ENCODE measurements at regions of chr5 and their contacts with region 1.

Region 1: DNA sequence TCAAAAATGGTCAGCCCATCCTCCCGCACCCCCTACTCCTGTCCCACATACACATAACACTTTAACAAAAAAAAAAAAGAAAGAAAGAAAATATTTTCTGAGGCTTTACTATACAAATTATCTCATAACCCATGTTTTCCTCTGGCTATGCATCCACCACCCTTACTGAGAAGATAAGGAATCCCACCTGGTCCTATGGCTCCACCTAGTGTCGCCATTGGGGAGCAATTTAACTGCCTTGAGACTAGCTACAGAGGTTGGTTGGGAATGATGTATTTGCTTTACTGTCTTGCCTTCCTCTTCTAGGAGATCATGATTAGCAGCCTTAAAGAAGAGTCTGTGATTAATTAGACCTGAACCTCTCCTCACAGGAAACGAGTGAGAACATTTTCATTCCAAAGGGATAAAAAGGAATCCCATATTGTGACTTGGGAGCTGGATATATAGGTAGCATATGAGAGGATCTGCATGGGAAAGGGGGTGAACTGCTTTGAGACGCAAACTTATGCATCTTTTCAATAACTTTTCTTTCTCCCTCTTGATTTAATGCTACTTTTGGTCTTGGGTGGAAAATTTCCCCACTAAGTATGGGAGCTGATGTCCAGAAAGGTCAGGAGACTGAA is 77.7 kb upstream of the SELENOP start:
- DNase-seq: peak; percentile 68 to 83 (median 70)
- ATAC-seq: peak; percentile 92 to 96 (median 93)
- H3K4me3 ChIP-seq: no peak overlapping the region
- H3K27ac ChIP-seq: peak overlapping the region in 1 of 3 donors; percentile 29
- H3K4me1 ChIP-seq: peaks cover 0 to 31% (median 4%) of the 10 kb centered on the region in 4 donors
- H3K27me3 ChIP-seq: no peaks in the 10 kb centered on the region
- CTCF ChIP-seq: peak; percentile 91 to 93 (median 93)
- POLR2A ChIP-seq: no peak

Region 2: GRCh38 chr5:42772265-42772993 is 117.0 kb before region 1 on chr5:
- intact Hi-C with region 1: no loop called
- DNase-seq: no peak
- ATAC-seq: peak in 1 of 4 donors; percentile 71
- H3K4me3 ChIP-seq: no peak overlapping the region
- H3K27ac ChIP-seq: no peak overlapping the region
- H3K4me1 ChIP-seq: peaks cover 0 to 8% (median 0%) of the 10 kb centered on the region in 4 donors
- H3K27me3 ChIP-seq: no peaks in the 10 kb centered on the region
- CTCF ChIP-seq: no peak
- POLR2A ChIP-seq: no peak

Region 3: DNA sequence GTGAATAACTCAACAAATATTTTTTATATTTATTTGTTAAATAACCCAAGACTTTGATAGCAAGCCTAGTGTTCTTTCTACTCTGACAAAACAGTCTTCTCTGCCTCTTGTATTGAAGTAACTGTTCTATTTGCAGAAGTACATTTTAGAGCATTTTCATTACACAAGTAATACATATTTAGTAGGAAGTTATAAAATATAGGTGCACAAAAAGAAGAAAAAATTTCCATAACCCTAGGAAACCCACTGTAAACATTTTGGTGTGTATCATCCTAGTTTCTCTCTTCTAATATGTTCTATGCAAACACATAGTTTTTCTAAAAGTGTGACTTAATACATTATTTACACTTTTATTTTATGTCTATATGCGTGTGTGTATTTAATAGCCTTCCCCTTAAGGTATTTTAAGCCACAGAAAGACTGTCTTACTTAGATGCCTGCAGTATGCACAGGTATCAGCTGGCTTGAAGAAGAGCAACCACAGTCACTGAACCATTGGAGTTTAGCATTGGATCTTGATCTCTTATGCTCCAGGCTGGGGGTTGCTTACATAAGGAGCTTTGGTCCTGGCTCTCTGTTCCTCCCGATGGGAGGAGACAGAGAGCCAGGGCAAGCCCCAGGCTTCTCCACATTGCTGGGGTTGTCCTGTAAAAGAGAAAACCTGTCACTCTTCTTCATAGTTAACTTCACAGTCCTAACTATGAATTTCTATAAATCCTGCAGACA is 81.5 kb before region 1 on chr5:
- intact Hi-C with region 1: loop called in 1 of 2 experiments (anchors 10 kb)
- DNase-seq: peak; percentile 40 to 65 (median 62)
- ATAC-seq: peak; percentile 50 to 83 (median 58)
- H3K4me3 ChIP-seq: peak overlapping the region; percentile 50 to 72 (median 66)
- H3K27ac ChIP-seq: peak overlapping the region; percentile 79 to 86 (median 81)
- H3K4me1 ChIP-seq: peaks cover 0 to 47% (median 3%) of the 10 kb centered on the region in 4 donors
- H3K27me3 ChIP-seq: no peaks in the 10 kb centered on the region
- CTCF ChIP-seq: peak; percentile 6 to 41 (median 30)
- POLR2A ChIP-seq: no peak